ENCODE measurements at regions of chr2 and their contacts with region 1.

Region 1: GRCh38 chr2:203871371-203871983 is 3.9 kb downstream of the CTLA4 start:
- DNase-seq: no peak
- ATAC-seq: peak; percentile 80
- H3K4me3 Mint-ChIP-seq: peak overlapping the region; percentile 7
- H3K27ac Mint-ChIP-seq: peak overlapping the region; percentile 88
- H3K4me1 Mint-ChIP-seq: peaks cover 24% of the 10 kb centered on the region
- H3K27me3 Mint-ChIP-seq: peaks cover 5% of the 10 kb centered on the region
- CTCF ChIP-seq: no peak

Region 2: GRCh38 chr2:203549406-203549805 is 322.1 kb before region 1 on chr2:
- CTCF ChIA-PET with region 1: no interaction called
- POLR2A ChIA-PET with region 1: no interaction called
- intact Hi-C with region 1: no loop called
- DNase-seq: no peak
- ATAC-seq: no peak
- H3K4me3 Mint-ChIP-seq: no peak overlapping the region
- H3K27ac Mint-ChIP-seq: no peak overlapping the region
- H3K4me1 Mint-ChIP-seq: no peaks in the 10 kb centered on the region
- H3K27me3 Mint-ChIP-seq: peaks cover 28% of the 10 kb centered on the region
- CTCF ChIP-seq: no peak

Region 3: DNA sequence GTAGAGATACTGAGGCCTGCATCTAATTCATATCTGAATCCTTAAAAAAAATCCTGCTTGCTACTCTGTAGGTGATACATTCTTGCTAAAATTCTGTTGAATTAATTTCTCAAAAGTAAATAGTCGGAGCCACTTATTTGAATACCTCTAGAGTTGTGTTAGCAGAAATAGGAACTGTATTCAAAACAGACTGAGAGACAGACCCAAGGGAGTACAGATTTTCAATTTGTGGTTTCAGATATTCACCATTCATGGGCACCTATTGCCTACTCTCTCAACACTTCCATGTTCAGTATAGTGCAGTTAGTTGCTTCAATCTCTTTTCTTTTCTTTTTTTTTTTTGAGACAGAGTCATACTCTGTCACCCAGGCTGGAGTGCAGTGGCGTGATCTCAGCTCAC is 50.5 kb before region 1 on chr2:
- CTCF ChIA-PET with region 1: no interaction called
- POLR2A ChIA-PET with region 1: no interaction called
- intact Hi-C with region 1: loop called (anchors 1 kb)
- DNase-seq: no peak
- ATAC-seq: peak; percentile 93
- H3K4me3 Mint-ChIP-seq: no peak overlapping the region
- H3K27ac Mint-ChIP-seq: no peak overlapping the region
- H3K4me1 Mint-ChIP-seq: peaks cover 9% of the 10 kb centered on the region
- H3K27me3 Mint-ChIP-seq: peaks cover 69% of the 10 kb centered on the region
- CTCF ChIP-seq: no peak

Region 4: DNA sequence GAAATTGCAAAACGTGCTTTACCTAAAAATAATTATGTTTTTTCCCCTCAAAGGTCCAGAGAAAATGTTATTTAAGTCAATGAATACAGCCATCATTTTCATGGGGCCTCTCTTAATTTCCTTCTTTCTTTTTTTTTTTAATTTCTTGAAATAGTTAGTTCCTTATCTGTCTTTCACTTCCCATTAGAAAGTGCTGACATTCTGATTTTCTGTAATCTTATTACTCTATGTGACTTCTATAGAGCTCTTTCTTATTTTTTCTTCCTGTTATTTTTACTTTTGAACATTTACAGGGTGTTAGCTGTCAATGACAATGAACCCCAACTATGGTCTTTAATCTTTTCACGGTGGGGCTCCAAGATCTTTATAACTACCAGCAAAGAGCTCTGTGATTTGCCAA is 26.1 kb after region 1 on chr2:
- CTCF ChIA-PET with region 1: no interaction called
- POLR2A ChIA-PET with region 1: interaction called, 3 read pairs
- intact Hi-C with region 1: loop called (anchors 1 kb)
- DNase-seq: no peak
- ATAC-seq: peak; percentile 60
- H3K4me3 Mint-ChIP-seq: peak overlapping the region; percentile 45
- H3K27ac Mint-ChIP-seq: peak overlapping the region; percentile 50
- H3K4me1 Mint-ChIP-seq: peaks cover 18% of the 10 kb centered on the region
- H3K27me3 Mint-ChIP-seq: peaks cover 9% of the 10 kb centered on the region
- CTCF ChIP-seq: no peak

Region 5: GRCh38 chr2:203909261-203909967 is 37.9 kb after region 1 on chr2:
- CTCF ChIA-PET with region 1: interaction called, 3 read pairs
- POLR2A ChIA-PET with region 1: interaction called, 3 read pairs
- intact Hi-C with region 1: loop called (anchors 2 kb)
- DNase-seq: no peak
- ATAC-seq: peak; percentile 28
- H3K4me3 Mint-ChIP-seq: no peak overlapping the region
- H3K27ac Mint-ChIP-seq: no peak overlapping the region
- H3K4me1 Mint-ChIP-seq: peaks cover 12% of the 10 kb centered on the region
- H3K27me3 Mint-ChIP-seq: peaks cover 12% of the 10 kb centered on the region
- CTCF ChIP-seq: no peak

Region 6: DNA sequence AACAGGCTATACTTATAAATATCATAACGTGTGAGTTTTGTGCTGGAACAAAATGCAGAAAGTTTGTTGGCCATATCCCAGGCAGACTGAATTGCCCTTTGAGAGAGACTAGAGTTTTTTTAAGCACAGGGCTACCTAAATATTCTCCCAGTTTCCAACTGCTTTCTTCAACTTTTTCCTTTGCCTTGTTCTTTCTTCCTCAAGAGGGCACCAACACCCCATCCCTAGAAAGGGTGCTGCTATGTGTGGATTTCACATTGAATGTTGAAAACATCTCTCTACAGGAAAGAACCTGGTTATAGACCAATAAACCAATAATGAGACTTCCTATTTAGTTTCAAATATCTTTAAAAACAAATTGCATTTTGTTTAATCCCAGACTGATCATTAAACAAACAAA is 153.0 kb after region 1 on chr2:
- CTCF ChIA-PET with region 1: no interaction called
- POLR2A ChIA-PET with region 1: no interaction called
- intact Hi-C with region 1: loop called (anchors 1 kb)
- DNase-seq: no peak
- ATAC-seq: no peak
- H3K4me3 Mint-ChIP-seq: no peak overlapping the region
- H3K27ac Mint-ChIP-seq: no peak overlapping the region
- H3K4me1 Mint-ChIP-seq: peaks cover 14% of the 10 kb centered on the region
- H3K27me3 Mint-ChIP-seq: no peaks in the 10 kb centered on the region
- CTCF ChIP-seq: no peak

Measured in activated B cell treated with CpG ODN at 0.5 μM for 24 hours (primary cell).